OCI-LY7 (cell line): ENCODE measurements at regions of chr7 and their contacts with region 1.

Region 1: DNA sequence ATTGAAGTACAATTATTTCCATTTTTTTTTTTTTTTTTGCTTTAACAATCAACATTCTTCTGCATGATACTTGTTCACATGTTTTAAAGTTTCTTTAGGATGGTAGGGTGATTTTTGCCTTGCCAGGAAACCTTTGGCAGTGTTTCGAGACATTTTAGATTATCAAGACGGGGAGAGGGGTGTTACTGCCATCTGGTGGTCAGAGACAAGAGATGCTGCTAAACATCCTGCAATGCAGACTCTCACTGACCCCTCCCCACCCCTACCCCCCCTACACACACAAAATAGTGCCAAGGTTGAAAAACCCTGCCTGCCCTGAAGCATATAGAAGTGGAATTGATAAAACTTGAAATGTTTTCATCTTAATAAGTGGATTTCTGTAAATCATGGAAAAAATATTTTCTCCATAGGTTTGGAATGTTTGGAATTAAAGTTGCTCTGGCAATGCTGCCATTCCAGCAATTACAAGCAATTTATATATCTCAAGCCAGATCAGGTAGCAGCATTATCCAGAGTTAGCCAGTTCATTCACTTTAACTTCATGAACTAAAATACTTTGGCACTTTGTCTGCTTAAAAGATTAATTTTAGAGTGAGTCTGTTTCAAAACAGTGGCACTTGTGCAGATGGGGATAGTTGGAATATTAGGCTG is 62.1 kb downstream of the SDHAF3 start:
- DNase-seq: peak; percentile 66
- H3K4me3 ChIP-seq: no peak overlapping the region
- H3K27ac ChIP-seq: no peak overlapping the region
- H3K4me1 ChIP-seq: no peaks in the 10 kb centered on the region
- CTCF ChIP-seq: peak; percentile 85

Region 2: DNA sequence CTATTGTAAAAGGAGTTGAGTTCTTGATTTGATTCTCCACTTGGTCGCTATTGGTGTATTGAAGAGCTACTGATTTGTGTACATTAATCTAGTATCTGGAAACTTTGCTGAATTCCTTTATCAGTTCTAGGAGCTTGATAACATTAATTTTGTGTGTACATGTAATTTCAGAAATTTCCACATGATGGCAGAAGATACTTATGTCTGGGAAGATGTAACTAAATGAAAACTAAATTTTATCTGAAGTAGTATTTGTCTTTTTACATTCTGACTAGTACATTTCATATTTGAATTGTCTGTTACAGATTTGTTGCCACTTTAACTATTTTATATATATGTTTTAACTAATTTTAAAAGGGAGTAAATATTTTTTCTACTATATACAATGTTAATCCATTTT is 34.5 kb before region 1 on chr7:
- CTCF ChIA-PET with region 1: no interaction called
- POLR2A ChIA-PET with region 1: interaction called, 6 read pairs
- intact Hi-C with region 1: loop called (anchors 1 kb)
- DNase-seq: peak; percentile 24
- H3K4me3 ChIP-seq: no peak overlapping the region
- H3K27ac ChIP-seq: no peak overlapping the region
- H3K4me1 ChIP-seq: no peaks in the 10 kb centered on the region
- CTCF ChIP-seq: peak; percentile 75

Region 3: GRCh38 chr7:97555857-97556421 is 376.4 kb after region 1 on chr7:
- CTCF ChIA-PET with region 1: no interaction called
- POLR2A ChIA-PET with region 1: no interaction called
- intact Hi-C with region 1: no loop called
- DNase-seq: no peak
- H3K4me3 ChIP-seq: no peak overlapping the region
- H3K27ac ChIP-seq: no peak overlapping the region
- H3K4me1 ChIP-seq: no peaks in the 10 kb centered on the region
- CTCF ChIP-seq: no peak